PC-9 (cell line): ENCODE measurements at regions of chr20 and their contacts with region 1.

Region 1: DNA sequence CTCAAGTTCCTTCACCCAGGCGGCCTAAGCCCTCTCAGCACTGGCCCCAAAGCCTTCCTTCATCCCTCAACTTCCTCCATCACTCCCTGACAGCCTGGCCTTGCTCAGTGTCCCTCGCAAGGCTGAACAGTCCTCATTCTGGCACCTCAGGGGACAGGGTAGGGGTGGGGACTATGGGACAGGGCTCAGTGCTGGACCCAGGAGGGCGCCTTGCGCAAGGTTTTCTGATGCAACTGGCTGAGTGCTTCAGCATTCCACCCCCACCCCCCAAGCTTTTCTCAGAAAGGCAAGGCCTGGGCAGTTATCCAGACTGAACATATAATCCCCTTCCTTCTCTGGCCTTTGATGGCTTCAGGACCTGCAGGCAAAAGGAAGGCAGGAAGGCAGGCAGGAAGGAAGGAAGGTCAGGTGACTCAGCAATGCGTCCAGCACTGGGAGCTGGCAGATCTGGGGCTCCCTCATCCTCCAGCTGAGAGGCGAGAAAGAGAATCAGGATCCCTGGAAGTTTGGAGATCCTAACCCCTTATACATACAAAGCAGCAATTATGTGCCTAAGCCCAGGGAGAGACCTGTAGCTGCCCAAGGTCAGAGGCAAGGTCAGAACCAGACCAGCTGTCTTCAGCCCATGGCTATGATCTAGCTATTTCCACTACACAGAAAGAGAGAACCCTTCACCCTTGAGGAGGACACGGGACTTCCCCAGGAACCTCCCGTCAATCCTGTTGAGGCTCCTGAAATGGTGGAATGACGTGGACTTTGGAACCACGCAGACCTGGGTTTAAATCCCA is 8.6 kb upstream of the TRIB3 start:
- DNase-seq: peak; percentile 88 to 96
- H3K4me3 ChIP-seq: no peak overlapping the region
- H3K27ac ChIP-seq: peak overlapping the region; percentile 96
- H3K4me1 ChIP-seq: peaks cover 98% of the 10 kb centered on the region
- H3K27me3 ChIP-seq: no peaks in the 10 kb centered on the region
- CTCF ChIP-seq: no peak

Region 2: DNA sequence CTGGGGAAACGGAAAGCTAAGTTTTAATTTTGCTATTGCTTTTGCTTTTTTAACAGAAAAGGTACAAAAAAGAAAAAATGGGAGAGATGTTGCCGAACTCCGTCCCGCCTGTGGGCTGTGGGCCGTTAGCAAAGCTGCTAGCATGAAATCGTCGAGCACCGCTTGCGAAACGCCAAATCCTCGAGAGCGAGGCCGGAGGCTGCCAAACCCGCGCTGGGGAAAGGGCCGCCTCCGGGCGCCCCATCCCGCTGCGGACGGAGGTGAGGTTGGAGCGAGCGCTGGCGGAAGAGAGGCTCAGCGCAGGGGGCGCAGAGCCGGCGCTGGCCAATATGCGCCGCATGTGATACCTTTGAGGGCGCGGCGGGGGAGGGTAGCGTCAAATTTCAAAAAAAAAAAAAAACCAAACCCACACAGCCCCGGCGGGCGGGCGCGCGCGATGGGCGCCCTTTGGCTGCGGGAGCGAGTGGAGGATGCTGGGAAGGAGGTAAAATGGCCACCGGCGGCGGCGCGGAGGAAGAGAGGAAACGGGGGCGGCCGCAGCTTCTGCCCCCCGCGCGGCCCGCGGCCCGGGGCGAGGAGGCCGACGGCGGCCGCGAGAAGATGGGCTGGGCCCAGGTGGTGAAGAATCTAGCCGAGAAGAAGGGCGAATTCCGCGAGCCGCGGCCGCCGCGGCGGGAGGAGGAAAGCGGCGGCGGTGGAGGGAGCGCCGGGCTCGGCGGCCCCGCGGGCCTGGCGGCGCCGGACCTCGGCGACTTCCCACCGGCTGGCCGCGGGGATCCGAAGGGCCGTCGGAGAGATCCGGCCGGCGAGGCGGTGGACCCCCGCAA is 74.6 kb before region 1 on chr20 and contains the start of gene ZCCHC3:
- CTCF ChIA-PET with region 1: no interaction called
- POLR2A ChIA-PET with region 1: interaction called, 10 read pairs
- intact Hi-C with region 1: no loop called
- DNase-seq: peak; percentile 86 to 91
- H3K4me3 ChIP-seq: peak within 1 kb of the TSS; percentile 82
- H3K27ac ChIP-seq: peak within 1 kb of the TSS; percentile 81
- H3K4me1 ChIP-seq: peaks cover 27% of the 10 kb centered on the region
- H3K27me3 ChIP-seq: no peaks in the 10 kb centered on the region
- CTCF ChIP-seq: no peak
- total RNA-seq, gene ZCCHC3: 16.0 and 17.7 TPM in 2 replicates

Region 3: GRCh38 chr20:341682-342081 is 30.3 kb before region 1 on chr20:
- CTCF ChIA-PET with region 1: no interaction called
- POLR2A ChIA-PET with region 1: no interaction called
- intact Hi-C with region 1: no loop called
- DNase-seq: peak; percentile 55 to 86
- H3K4me3 ChIP-seq: no peak overlapping the region
- H3K27ac ChIP-seq: no peak overlapping the region
- H3K4me1 ChIP-seq: no peaks in the 10 kb centered on the region
- H3K27me3 ChIP-seq: no peaks in the 10 kb centered on the region
- CTCF ChIP-seq: no peak